ENCODE measurements at regions of chr2 and their contacts with region 1.

Region 1: DNA sequence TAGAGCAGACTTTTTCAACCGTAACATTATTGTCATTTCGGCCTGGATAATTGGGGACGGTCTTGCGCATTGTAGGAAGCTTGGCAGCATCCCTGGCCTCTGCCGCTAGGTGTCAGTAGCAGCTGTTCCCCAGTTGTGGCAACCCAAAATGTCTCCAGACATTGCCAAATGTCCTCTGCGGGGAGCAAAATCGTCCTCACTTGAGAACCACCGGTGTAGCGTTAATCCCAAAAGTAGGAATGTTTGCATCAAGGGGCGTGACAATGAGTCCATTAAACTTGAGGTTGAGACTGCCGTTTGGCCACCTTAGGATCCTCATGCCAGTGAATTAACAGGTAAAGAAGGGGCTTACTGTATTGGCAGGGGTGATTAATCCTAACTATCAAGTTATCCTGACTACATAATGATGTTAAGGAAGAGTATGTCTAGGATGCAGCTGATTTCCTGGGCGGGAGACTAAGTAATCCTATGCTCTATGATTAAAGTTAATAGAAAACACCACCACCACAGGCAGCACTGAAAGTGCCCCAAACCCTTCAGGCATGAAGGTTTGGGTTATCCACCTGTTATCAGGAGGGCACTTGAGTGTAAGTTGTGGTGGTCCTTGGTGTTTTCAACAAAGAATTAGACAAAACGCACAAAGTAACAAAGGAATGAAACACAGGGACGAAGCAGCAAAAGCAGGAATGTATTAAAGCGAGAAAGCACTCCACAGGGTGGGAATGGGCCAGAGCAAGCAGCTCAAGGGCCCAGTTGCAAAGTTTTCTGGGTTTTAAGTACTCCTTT is 4.9 kb upstream of the ZC3H8 start:
- DNase-seq: peak; percentile 92
- ATAC-seq: peak; percentile 49
- H3K4me3 Mint-ChIP-seq: peak overlapping the region; percentile 16
- H3K27ac Mint-ChIP-seq: peak overlapping the region; percentile 76
- H3K4me1 Mint-ChIP-seq: peaks cover 22% of the 10 kb centered on the region
- H3K27me3 Mint-ChIP-seq: peaks cover 1% of the 10 kb centered on the region

Region 2: DNA sequence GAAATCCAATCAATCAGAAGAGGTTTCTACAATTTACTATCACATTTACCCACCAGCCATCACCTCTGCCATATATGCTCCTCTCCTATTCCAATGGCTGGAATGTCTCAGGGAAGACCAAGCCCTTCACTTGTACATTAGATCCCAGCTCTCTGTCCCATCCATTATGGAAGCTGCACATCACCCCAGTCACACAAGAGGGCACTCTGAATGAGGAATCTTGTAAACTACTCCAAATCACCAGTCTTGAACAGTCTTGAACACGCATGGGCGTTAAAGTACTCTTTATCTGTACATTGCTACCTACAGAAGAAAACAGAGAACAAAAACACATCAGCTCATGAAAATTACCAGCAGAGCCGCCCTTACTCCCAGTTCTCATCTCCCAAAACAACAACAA is 43.5 kb before region 1 on chr2:
- CTCF ChIA-PET with region 1: no interaction called
- POLR2A ChIA-PET with region 1: no interaction called
- intact Hi-C with region 1: no loop called
- DNase-seq: no peak
- ATAC-seq: no peak
- H3K4me3 Mint-ChIP-seq: no peak overlapping the region
- H3K27ac Mint-ChIP-seq: no peak overlapping the region
- H3K4me1 Mint-ChIP-seq: peaks cover 3% of the 10 kb centered on the region
- H3K27me3 Mint-ChIP-seq: no peaks in the 10 kb centered on the region

Region 3: GRCh38 chr2:112242384-112242783 is 17.3 kb before region 1 on chr2:
- CTCF ChIA-PET with region 1: interaction called, 33 read pairs
- POLR2A ChIA-PET with region 1: no interaction called
- intact Hi-C with region 1: no loop called
- DNase-seq: no peak
- ATAC-seq: peak; percentile 20
- H3K4me3 Mint-ChIP-seq: no peak overlapping the region
- H3K27ac Mint-ChIP-seq: peak overlapping the region; percentile 39
- H3K4me1 Mint-ChIP-seq: peaks cover 40% of the 10 kb centered on the region
- H3K27me3 Mint-ChIP-seq: no peaks in the 10 kb centered on the region

Region 4: GRCh38 chr2:112275306-112275886 is 15.7 kb after region 1 on chr2 and contains the start of gene ZC3H6:
- CTCF ChIA-PET with region 1: interaction called, 29 read pairs
- POLR2A ChIA-PET with region 1: no interaction called
- intact Hi-C with region 1: loop called (anchors 1 kb)
- DNase-seq: peak; percentile 100
- ATAC-seq: peak; percentile 98
- H3K4me3 Mint-ChIP-seq: peak within 1 kb of the TSS; percentile 90
- H3K27ac Mint-ChIP-seq: peak within 1 kb of the TSS; percentile 97
- H3K4me1 Mint-ChIP-seq: peaks cover 26% of the 10 kb centered on the region
- H3K27me3 Mint-ChIP-seq: no peaks in the 10 kb centered on the region
- total RNA-seq, gene ZC3H6: 15.1 to 15.3 TPM

Region 5: GRCh38 chr2:112433932-112434730 is 174.4 kb after region 1 on chr2:
- CTCF ChIA-PET with region 1: no interaction called
- POLR2A ChIA-PET with region 1: no interaction called
- intact Hi-C with region 1: loop called (anchors 1 to 10 kb)
- DNase-seq: no peak
- ATAC-seq: no peak
- H3K4me3 Mint-ChIP-seq: peak overlapping the region; percentile 65
- H3K27ac Mint-ChIP-seq: no peak overlapping the region
- H3K4me1 Mint-ChIP-seq: peaks cover 10% of the 10 kb centered on the region
- H3K27me3 Mint-ChIP-seq: peaks cover 5% of the 10 kb centered on the region